ENCODE measurements at regions of chr6 and their contacts with region 1.

Region 1: GRCh38 chr6:39189915-39190544 is 39.2 kb downstream of the KCNK5 start:
- DNase-seq: peak; percentile 86

Region 2: DNA sequence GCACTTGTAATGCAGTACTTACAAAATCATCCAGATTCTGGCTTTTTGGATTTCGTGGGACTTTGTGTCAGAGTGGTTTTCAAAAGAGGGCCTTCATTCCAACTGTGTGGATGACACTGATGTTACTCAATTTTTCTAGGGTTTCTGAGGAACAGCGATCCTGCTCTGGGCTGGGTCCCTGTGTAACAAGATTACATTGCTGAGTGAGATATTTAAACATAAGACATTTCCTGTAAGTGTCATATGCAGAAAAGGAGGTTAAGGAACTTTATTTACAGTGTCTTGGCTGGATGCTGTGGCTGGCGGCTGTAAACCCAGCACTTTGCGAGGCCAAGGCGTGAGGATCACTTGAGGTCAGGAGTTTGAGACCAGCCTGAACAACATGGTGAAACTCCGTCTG is 1363.8 kb before region 1 on chr6:
- intact Hi-C with region 1: loop called in 1 of 2 experiments (anchors 5 kb)
- DNase-seq: no peak

Measured in posterior vena cava (tissue), 2 donors.